ENCODE measurements at regions of chr7 and their contacts with region 1.

Region 1: GRCh38 chr7:142796608-142797385 is 26.0 kb downstream of the PRSS2 start:
- DNase-seq: peak in 2 of 5 donors; percentile 41 to 47
- H3K4me3 ChIP-seq: peak overlapping the region; percentile 84 to 85
- H3K4me3 Mint-ChIP-seq: peak overlapping the region; percentile 93 to 100 (median 99)
- H3K27ac ChIP-seq: peak overlapping the region; percentile 99
- H3K27ac Mint-ChIP-seq: peak overlapping the region; percentile 98 to 100 (median 100)
- H3K4me1 ChIP-seq: peaks cover 68% of the 10 kb centered on the region
- H3K4me1 Mint-ChIP-seq: peaks cover 50 to 79% (median 62%) of the 10 kb centered on the region in 4 donors
- H3K27me3 ChIP-seq: no peaks in the 10 kb centered on the region
- H3K27me3 Mint-ChIP-seq: no peaks in the 10 kb centered on the region

Region 2: GRCh38 chr7:142308326-142308725 is 488.5 kb before region 1 on chr7:
- CTCF ChIA-PET with region 1: interaction called, 4 read pairs
- POLR2A ChIA-PET with region 1: interaction called, 44 read pairs
- intact Hi-C with region 1: loop called (anchors 2 kb)
- DNase-seq: no peak
- H3K4me3 ChIP-seq: no peak overlapping the region
- H3K4me3 Mint-ChIP-seq: peak overlapping the region; percentile 8 to 66 (median 50)
- H3K27ac ChIP-seq: no peak overlapping the region
- H3K27ac Mint-ChIP-seq: no peak overlapping the region
- H3K4me1 ChIP-seq: peaks cover 19% of the 10 kb centered on the region
- H3K4me1 Mint-ChIP-seq: peaks cover 8 to 21% (median 13%) of the 10 kb centered on the region in 4 donors
- H3K27me3 ChIP-seq: no peaks in the 10 kb centered on the region
- H3K27me3 Mint-ChIP-seq: peaks cover 6 to 8% of the 10 kb centered on the region in 2 donors

Region 3: DNA sequence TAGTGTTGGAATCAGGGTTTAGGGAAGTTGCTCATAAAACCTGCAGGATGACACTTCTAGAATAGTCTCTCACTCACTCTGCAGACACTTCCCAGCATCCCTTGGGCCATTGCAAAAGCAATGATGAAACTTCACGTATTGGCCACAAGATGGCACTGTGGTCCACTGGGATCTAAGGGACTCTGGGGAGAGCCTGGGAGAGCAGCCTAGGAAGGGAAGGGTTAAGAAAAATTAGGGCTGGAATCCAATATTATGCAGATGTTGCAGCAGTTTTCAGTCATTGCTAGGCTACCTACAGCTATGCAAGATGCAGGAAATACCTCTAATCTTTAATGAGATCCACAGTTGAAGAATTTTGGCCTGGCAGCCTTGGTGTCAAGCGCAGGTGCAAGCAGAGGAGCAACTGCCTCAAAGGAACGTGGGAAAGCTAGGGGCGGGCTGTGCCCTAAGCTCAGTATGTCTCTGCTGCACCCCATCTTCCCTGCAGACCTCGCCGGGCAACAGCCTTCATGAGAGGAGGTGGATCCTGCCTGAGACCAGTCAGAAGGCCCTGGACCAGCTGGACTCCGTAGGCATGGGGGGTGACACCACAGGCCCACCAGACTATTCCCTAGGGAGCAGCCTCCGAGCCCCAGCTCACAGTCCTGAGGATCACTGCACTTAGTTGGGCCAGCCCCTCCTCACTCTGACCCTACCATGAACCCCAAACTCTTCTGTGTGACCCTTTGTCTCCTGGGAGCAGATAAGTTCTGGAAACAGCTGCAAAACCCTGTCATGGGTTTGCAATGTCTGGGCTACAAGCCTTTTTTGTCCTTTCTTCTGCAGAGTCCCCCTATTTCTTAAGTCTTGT is 411.1 kb before region 1 on chr7:
- CTCF ChIA-PET with region 1: no interaction called
- POLR2A ChIA-PET with region 1: interaction called, 23 read pairs
- intact Hi-C with region 1: no loop called
- DNase-seq: peak in 4 of 5 donors; percentile 16 to 31 (median 28)
- H3K4me3 ChIP-seq: no peak overlapping the region
- H3K4me3 Mint-ChIP-seq: peak overlapping the region in 4 of 8 donors; percentile 3 to 32 (median 11)
- H3K27ac ChIP-seq: no peak overlapping the region
- H3K27ac Mint-ChIP-seq: peak overlapping the region in 2 of 7 donors; percentile 25 to 46
- H3K4me1 ChIP-seq: peaks cover 20% of the 10 kb centered on the region
- H3K4me1 Mint-ChIP-seq: peaks cover 18 to 28% (median 20%) of the 10 kb centered on the region in 4 donors
- H3K27me3 ChIP-seq: no peaks in the 10 kb centered on the region
- H3K27me3 Mint-ChIP-seq: no peaks in the 10 kb centered on the region

Region 4: GRCh38 chr7:142459551-142459963 is 337.2 kb before region 1 on chr7:
- CTCF ChIA-PET with region 1: no interaction called
- POLR2A ChIA-PET with region 1: interaction called, 65 read pairs
- intact Hi-C with region 1: no loop called
- DNase-seq: peak in 4 of 5 donors; percentile 30 to 39 (median 34)
- H3K4me3 ChIP-seq: no peak overlapping the region
- H3K4me3 Mint-ChIP-seq: peak overlapping the region in 7 of 8 donors; percentile 2 to 69 (median 29)
- H3K27ac ChIP-seq: no peak overlapping the region
- H3K27ac Mint-ChIP-seq: peak overlapping the region in 6 of 7 donors; percentile 34 to 83 (median 58)
- H3K4me1 ChIP-seq: peaks cover 46% of the 10 kb centered on the region
- H3K4me1 Mint-ChIP-seq: peaks cover 35 to 68% (median 53%) of the 10 kb centered on the region in 4 donors
- H3K27me3 ChIP-seq: no peaks in the 10 kb centered on the region
- H3K27me3 Mint-ChIP-seq: no peaks in the 10 kb centered on the region

Region 5: GRCh38 chr7:142542942-142543341 is 253.9 kb before region 1 on chr7:
- CTCF ChIA-PET with region 1: no interaction called
- POLR2A ChIA-PET with region 1: interaction called, 71 read pairs
- intact Hi-C with region 1: loop called (anchors 5 kb)
- DNase-seq: no peak
- H3K4me3 ChIP-seq: no peak overlapping the region
- H3K4me3 Mint-ChIP-seq: peak overlapping the region in 1 of 8 donors; percentile 7
- H3K27ac ChIP-seq: no peak overlapping the region
- H3K27ac Mint-ChIP-seq: peak overlapping the region in 2 of 7 donors; percentile 29 to 85
- H3K4me1 ChIP-seq: peaks cover 15% of the 10 kb centered on the region
- H3K4me1 Mint-ChIP-seq: peaks cover 9 to 20% (median 12%) of the 10 kb centered on the region in 4 donors
- H3K27me3 ChIP-seq: no peaks in the 10 kb centered on the region
- H3K27me3 Mint-ChIP-seq: no peaks in the 10 kb centered on the region

Region 6: GRCh38 chr7:142626420-142627035 is 170.3 kb before region 1 on chr7:
- CTCF ChIA-PET with region 1: no interaction called
- POLR2A ChIA-PET with region 1: interaction called, 120 read pairs
- intact Hi-C with region 1: no loop called
- DNase-seq: peak; percentile 55 to 67 (median 60)
- H3K4me3 ChIP-seq: no peak overlapping the region
- H3K4me3 Mint-ChIP-seq: peak overlapping the region; percentile 75 to 92 (median 89)
- H3K27ac ChIP-seq: peak overlapping the region; percentile 43
- H3K27ac Mint-ChIP-seq: peak overlapping the region; percentile 75 to 95 (median 88)
- H3K4me1 ChIP-seq: no peaks in the 10 kb centered on the region
- H3K4me1 Mint-ChIP-seq: peaks cover 0 to 5% (median 3%) of the 10 kb centered on the region in 4 donors
- H3K27me3 ChIP-seq: no peaks in the 10 kb centered on the region
- H3K27me3 Mint-ChIP-seq: no peaks in the 10 kb centered on the region

Region 7: DNA sequence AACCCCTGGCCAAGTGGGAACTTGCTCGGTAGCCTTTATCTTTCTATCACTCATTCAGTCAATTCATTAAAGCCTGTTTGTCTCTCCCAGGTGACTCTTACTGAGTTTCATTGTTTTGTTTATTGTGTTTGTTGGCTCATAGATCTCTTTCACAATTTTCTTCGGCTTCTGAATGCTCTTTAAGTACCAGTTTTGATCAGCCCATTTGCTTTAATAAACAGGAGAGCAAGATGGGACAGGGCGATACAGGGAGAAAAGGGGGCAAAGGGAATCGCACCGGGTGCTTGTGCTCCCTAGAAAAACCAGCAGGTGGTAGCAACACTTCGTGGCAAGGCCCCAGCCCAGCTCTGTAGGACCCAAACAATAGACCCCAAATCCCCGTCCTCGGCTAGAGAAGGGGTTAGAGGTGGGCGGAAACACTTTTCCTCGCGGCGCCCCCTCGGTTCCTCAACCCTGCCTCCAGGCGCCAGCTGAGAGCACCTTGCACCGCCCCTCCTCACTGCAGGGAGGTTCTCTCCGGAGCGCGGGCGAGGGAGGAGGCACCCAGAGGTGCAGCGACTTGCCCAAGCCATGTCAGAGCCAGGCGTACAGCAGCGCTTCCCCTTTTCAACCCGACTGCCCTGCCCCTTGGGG is 57.1 kb after region 1 on chr7:
- CTCF ChIA-PET with region 1: no interaction called
- POLR2A ChIA-PET with region 1: interaction called, 24 read pairs
- intact Hi-C with region 1: no loop called
- DNase-seq: peak; percentile 63 to 72 (median 71)
- H3K4me3 ChIP-seq: peak overlapping the region; percentile 81 to 90
- H3K4me3 Mint-ChIP-seq: peak overlapping the region; percentile 93 to 98 (median 97)
- H3K27ac ChIP-seq: peak overlapping the region; percentile 27
- H3K27ac Mint-ChIP-seq: peak overlapping the region; percentile 86 to 96 (median 92)
- H3K4me1 ChIP-seq: peaks cover 24% of the 10 kb centered on the region
- H3K4me1 Mint-ChIP-seq: peaks cover 12 to 34% (median 19%) of the 10 kb centered on the region in 4 donors
- H3K27me3 ChIP-seq: no peaks in the 10 kb centered on the region
- H3K27me3 Mint-ChIP-seq: peaks cover 3% of the 10 kb centered on the region in 2 donors

Region 8: GRCh38 chr7:142968229-142968628 is 171.4 kb after region 1 on chr7:
- CTCF ChIA-PET with region 1: no interaction called
- POLR2A ChIA-PET with region 1: no interaction called
- intact Hi-C with region 1: no loop called
- DNase-seq: no peak
- H3K4me3 ChIP-seq: no peak overlapping the region
- H3K4me3 Mint-ChIP-seq: no peak overlapping the region
- H3K27ac ChIP-seq: no peak overlapping the region
- H3K27ac Mint-ChIP-seq: no peak overlapping the region
- H3K4me1 ChIP-seq: no peaks in the 10 kb centered on the region
- H3K4me1 Mint-ChIP-seq: no peaks in the 10 kb centered on the region
- H3K27me3 ChIP-seq: peaks cover 14% of the 10 kb centered on the region
- H3K27me3 Mint-ChIP-seq: peaks cover 20 to 39% of the 10 kb centered on the region in 2 donors